Naive thymus-derived CD4-positive, alpha-beta T cell (primary cell): ENCODE measurements at regions of chr9 and their contacts with region 1.

Region 1: GRCh38 chr9:71725590-71726338 is 42.5 kb downstream of the CEMIP2 start:
- DNase-seq: no peak
- ATAC-seq: no peak
- H3K4me3 ChIP-seq: no peak overlapping the region
- H3K4me3 Mint-ChIP-seq: no peak overlapping the region
- H3K27ac ChIP-seq: no peak overlapping the region
- H3K27ac Mint-ChIP-seq: peak overlapping the region in 1 of 9 donors; percentile 18
- H3K4me1 ChIP-seq: no peaks in the 10 kb centered on the region
- H3K4me1 Mint-ChIP-seq: peaks cover 0 to 15% (median 11%) of the 10 kb centered on the region in 7 donors
- H3K27me3 ChIP-seq: no peaks in the 10 kb centered on the region
- H3K27me3 Mint-ChIP-seq: no peaks in the 10 kb centered on the region

Region 2: DNA sequence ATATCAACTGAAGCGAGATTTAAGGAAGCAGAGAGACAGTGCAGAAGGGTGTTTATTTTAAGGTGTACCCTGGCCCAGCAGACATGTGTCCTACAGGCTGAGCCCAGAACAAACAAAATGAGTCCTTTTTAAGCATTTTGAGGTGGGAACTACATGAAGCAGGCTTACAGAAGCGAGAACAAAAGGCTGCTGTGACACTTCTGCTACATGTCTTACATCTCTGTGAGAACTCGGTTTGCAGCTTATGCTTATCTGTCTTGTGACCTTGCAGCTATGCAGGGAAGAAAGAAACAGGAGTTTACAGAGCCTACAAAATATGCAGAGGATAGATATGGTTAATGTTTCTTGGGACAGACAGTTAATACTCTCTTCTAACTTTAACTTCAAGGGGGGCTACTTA is 253.4 kb before region 1 on chr9:
- CTCF ChIA-PET with region 1: no interaction called
- POLR2A ChIA-PET with region 1: no interaction called
- intact Hi-C with region 1: no loop called
- DNase-seq: no peak
- ATAC-seq: no peak
- H3K4me3 ChIP-seq: no peak overlapping the region
- H3K4me3 Mint-ChIP-seq: no peak overlapping the region
- H3K27ac ChIP-seq: no peak overlapping the region
- H3K27ac Mint-ChIP-seq: no peak overlapping the region
- H3K4me1 ChIP-seq: no peaks in the 10 kb centered on the region
- H3K4me1 Mint-ChIP-seq: no peaks in the 10 kb centered on the region
- H3K27me3 ChIP-seq: no peaks in the 10 kb centered on the region
- H3K27me3 Mint-ChIP-seq: peaks cover 0 to 48% (median 35%) of the 10 kb centered on the region in 5 donors

Region 3: DNA sequence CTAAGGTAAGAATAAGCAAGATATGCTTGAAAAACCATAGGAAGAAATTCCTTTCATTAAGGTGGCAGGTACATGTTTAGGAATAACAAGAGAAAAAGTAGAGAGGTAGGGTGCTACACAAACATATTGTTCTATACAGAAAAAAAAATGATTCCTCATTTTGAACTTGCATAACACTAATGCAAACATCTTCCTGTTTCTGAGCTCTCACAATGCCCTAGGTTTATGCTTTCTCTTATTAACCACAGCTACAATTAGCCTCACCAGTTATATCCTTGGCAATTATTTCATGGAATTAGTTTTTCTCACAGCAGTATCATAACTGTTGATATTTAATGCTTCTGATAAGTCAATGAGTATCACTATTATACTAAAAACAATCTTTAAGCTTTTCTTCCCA is 21.8 kb after region 1 on chr9:
- CTCF ChIA-PET with region 1: no interaction called
- POLR2A ChIA-PET with region 1: no interaction called
- intact Hi-C with region 1: loop called in 1 of 2 experiments (anchors 2 kb)
- DNase-seq: no peak
- ATAC-seq: peak; percentile 52
- H3K4me3 ChIP-seq: no peak overlapping the region
- H3K4me3 Mint-ChIP-seq: no peak overlapping the region
- H3K27ac ChIP-seq: no peak overlapping the region
- H3K27ac Mint-ChIP-seq: peak overlapping the region in 2 of 9 donors; percentile 65 to 72
- H3K4me1 ChIP-seq: peaks cover 0 to 4% of the 10 kb centered on the region in 2 donors
- H3K4me1 Mint-ChIP-seq: peaks cover 21 to 70% (median 32%) of the 10 kb centered on the region in 7 donors
- H3K27me3 ChIP-seq: no peaks in the 10 kb centered on the region
- H3K27me3 Mint-ChIP-seq: no peaks in the 10 kb centered on the region